CD4-positive, alpha-beta T cell (primary cell): ENCODE measurements at regions of chr5 and their contacts with region 1.

Region 1: GRCh38 chr5:176959051-176959450 is 47.5 kb downstream of the UIMC1 start:
- DNase-seq: peak in 3 of 14 experiments; percentile 51 to 61 (median 61)
- ATAC-seq: peak; percentile 49
- H3K4me3 ChIP-seq: no peak overlapping the region
- H3K4me3 Mint-ChIP-seq: no peak overlapping the region
- H3K27ac ChIP-seq: no peak overlapping the region
- H3K27ac Mint-ChIP-seq: peak overlapping the region; percentile 21
- H3K4me1 ChIP-seq: no peaks in the 10 kb centered on the region
- H3K4me1 Mint-ChIP-seq: peaks cover 6% of the 10 kb centered on the region
- H3K27me3 ChIP-seq: no peaks in the 10 kb centered on the region
- H3K27me3 Mint-ChIP-seq: no peaks in the 10 kb centered on the region
- CTCF ChIP-seq: no peak

Region 2: GRCh38 chr5:176573564-176574296 is 385.3 kb before region 1 on chr5:
- CTCF ChIA-PET with region 1: no interaction called
- POLR2A ChIA-PET with region 1: no interaction called
- intact Hi-C with region 1: loop called in 1 of 2 experiments (anchors 10 kb)
- DNase-seq: peak; percentile 60 to 89 (median 76)
- ATAC-seq: peak; percentile 79
- H3K4me3 ChIP-seq: no peak overlapping the region
- H3K4me3 Mint-ChIP-seq: no peak overlapping the region
- H3K27ac ChIP-seq: no peak overlapping the region
- H3K27ac Mint-ChIP-seq: no peak overlapping the region
- H3K4me1 ChIP-seq: peaks cover 13% of the 10 kb centered on the region
- H3K4me1 Mint-ChIP-seq: no peaks in the 10 kb centered on the region
- H3K27me3 ChIP-seq: no peaks in the 10 kb centered on the region
- H3K27me3 Mint-ChIP-seq: peaks cover 4% of the 10 kb centered on the region
- CTCF ChIP-seq: peak; percentile 79

Region 3: GRCh38 chr5:176660860-176661641 is 298.0 kb before region 1 on chr5:
- CTCF ChIA-PET with region 1: interaction called, 3 read pairs
- POLR2A ChIA-PET with region 1: no interaction called
- intact Hi-C with region 1: loop called (anchors 2 kb)
- DNase-seq: peak; percentile 58 to 91 (median 73)
- ATAC-seq: peak; percentile 76
- H3K4me3 ChIP-seq: no peak overlapping the region
- H3K4me3 Mint-ChIP-seq: peak overlapping the region; percentile 83
- H3K27ac ChIP-seq: no peak overlapping the region
- H3K27ac Mint-ChIP-seq: peak overlapping the region; percentile 52
- H3K4me1 ChIP-seq: peaks cover 35% of the 10 kb centered on the region
- H3K4me1 Mint-ChIP-seq: peaks cover 33% of the 10 kb centered on the region
- H3K27me3 ChIP-seq: peaks cover 0 to 2% of the 10 kb centered on the region in 2 experiments
- H3K27me3 Mint-ChIP-seq: peaks cover 22% of the 10 kb centered on the region
- CTCF ChIP-seq: peak; percentile 97